ENCODE measurements at regions of chr12 and their contacts with region 1.

Region 1: DNA sequence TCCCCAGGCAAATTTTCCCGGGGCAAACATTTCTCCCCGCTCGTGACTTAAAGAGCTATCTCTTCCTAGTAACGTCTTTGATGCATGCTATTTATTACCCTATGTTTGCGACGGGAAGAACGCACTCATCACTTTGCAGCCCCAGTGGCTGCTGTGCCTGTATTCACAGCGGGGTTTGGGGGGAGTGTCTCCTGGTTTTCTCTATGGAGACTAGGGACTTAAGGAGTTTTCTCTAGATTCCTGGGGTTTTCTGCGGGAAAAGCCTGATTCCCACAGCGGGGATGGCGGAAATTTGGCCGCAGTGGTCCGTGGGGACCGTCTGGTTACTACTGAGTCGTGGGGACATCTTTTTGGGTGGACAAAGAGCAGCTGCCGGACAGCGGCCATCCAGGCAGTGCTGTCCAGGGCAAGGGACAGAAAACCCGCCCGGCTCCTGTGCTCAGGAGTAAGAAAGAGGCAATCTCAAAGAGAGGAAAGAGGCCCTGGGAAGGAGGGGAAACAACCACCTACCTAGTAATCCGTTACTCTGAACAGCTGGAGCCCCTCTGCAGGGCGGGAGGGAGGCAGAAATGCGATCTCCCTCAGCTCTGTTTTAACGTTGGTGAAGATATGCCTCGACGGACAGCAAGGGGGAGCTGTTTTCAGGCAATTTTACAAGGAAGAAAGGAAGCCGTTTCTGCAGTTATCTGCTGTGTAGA is 771 bp upstream of the AVPR1A start:
- DNase-seq: peak; percentile 62 to 67
- H3K4me3 ChIP-seq: peak overlapping the region; percentile 46 to 65 (median 58)
- H3K27ac ChIP-seq: no peak overlapping the region
- H3K4me1 ChIP-seq: peaks cover 0 to 13% (median 9%) of the 10 kb centered on the region in 4 experiments; a peak in 5 of 7 replicates
- H3K27me3 ChIP-seq: peaks cover 17 to 41% (median 34%) of the 10 kb centered on the region in 4 experiments
- CTCF ChIP-seq: peak; percentile 67 to 95 (median 72)
- EP300 ChIP-seq: no peak
- POLR2A ChIP-seq: no peak
- RAD21 ChIP-seq: peak; percentile 69 to 71

Region 2: GRCh38 chr12:62995097-62995496 is 156.7 kb before region 1 on chr12:
- CTCF ChIA-PET with region 1: no interaction called
- POLR2A ChIA-PET with region 1: no interaction called
- DNase-seq: peak in 1 of 2 experiments; percentile 15
- H3K4me3 ChIP-seq: no peak overlapping the region
- H3K27ac ChIP-seq: no peak overlapping the region
- H3K4me1 ChIP-seq: peaks cover 0 to 5% (median 0%) of the 10 kb centered on the region in 4 experiments; a peak in 1 of 7 replicates
- H3K27me3 ChIP-seq: no peaks in the 10 kb centered on the region; a peak in 1 of 7 replicates
- CTCF ChIP-seq: peak in 2 of 3 experiments; percentile 14 to 37; a peak in 1 of 4 replicates
- EP300 ChIP-seq: no peak
- POLR2A ChIP-seq: no peak
- RAD21 ChIP-seq: peak; percentile 36 to 55; a peak in 3 of 4 replicates

Region 3: GRCh38 chr12:63006536-63006935 is 145.2 kb before region 1 on chr12:
- CTCF ChIA-PET with region 1: no interaction called
- POLR2A ChIA-PET with region 1: no interaction called
- DNase-seq: no peak
- H3K4me3 ChIP-seq: no peak overlapping the region
- H3K27ac ChIP-seq: no peak overlapping the region
- H3K4me1 ChIP-seq: no peaks in the 10 kb centered on the region
- H3K27me3 ChIP-seq: no peaks in the 10 kb centered on the region
- CTCF ChIP-seq: no peak
- EP300 ChIP-seq: no peak
- POLR2A ChIP-seq: no peak
- RAD21 ChIP-seq: no peak

Region 4: GRCh38 chr12:63037746-63038718 is 113.7 kb before region 1 on chr12:
- CTCF ChIA-PET with region 1: no interaction called
- POLR2A ChIA-PET with region 1: no interaction called
- DNase-seq: no peak
- H3K4me3 ChIP-seq: no peak overlapping the region
- H3K27ac ChIP-seq: no peak overlapping the region
- H3K4me1 ChIP-seq: no peaks in the 10 kb centered on the region
- H3K27me3 ChIP-seq: no peaks in the 10 kb centered on the region
- CTCF ChIP-seq: no peak
- EP300 ChIP-seq: no peak
- POLR2A ChIP-seq: no peak
- RAD21 ChIP-seq: no peak

Region 5: GRCh38 chr12:63075376-63076060 is 76.3 kb before region 1 on chr12:
- CTCF ChIA-PET with region 1: no interaction called
- POLR2A ChIA-PET with region 1: no interaction called
- DNase-seq: no peak
- H3K4me3 ChIP-seq: no peak overlapping the region
- H3K27ac ChIP-seq: no peak overlapping the region
- H3K4me1 ChIP-seq: peaks cover 0 to 3% (median 0%) of the 10 kb centered on the region in 4 experiments; a peak in 1 of 7 replicates
- H3K27me3 ChIP-seq: no peaks in the 10 kb centered on the region
- CTCF ChIP-seq: no peak
- EP300 ChIP-seq: no peak
- POLR2A ChIP-seq: no peak
- RAD21 ChIP-seq: no peak

Region 6: DNA sequence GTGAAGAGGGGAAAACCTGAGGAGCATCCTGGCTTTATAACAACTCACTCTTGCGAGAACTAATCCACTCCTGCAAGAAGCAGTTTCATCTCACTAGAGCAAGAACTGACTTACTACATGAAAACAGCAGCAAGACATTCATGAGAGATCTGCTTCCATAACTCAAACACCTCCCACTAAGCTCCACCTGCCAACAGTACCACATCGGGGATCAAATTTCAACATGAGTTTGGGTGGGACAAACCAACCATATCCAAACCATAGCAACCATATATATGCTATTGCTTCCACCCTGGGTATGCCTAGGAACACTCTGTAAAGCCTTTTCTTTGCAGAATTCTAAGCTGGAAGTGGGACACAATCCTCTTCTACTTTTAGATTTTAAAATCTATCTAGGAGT is 13.1 kb after region 1 on chr12:
- CTCF ChIA-PET with region 1: interaction called, 19 read pairs
- POLR2A ChIA-PET with region 1: no interaction called
- DNase-seq: no peak
- H3K4me3 ChIP-seq: no peak overlapping the region
- H3K27ac ChIP-seq: no peak overlapping the region
- H3K4me1 ChIP-seq: peaks cover 0 to 2% (median 0%) of the 10 kb centered on the region in 4 experiments; a peak in 1 of 7 replicates
- H3K27me3 ChIP-seq: no peaks in the 10 kb centered on the region
- CTCF ChIP-seq: no peak
- EP300 ChIP-seq: no peak
- POLR2A ChIP-seq: no peak
- RAD21 ChIP-seq: no peak

Region 7: DNA sequence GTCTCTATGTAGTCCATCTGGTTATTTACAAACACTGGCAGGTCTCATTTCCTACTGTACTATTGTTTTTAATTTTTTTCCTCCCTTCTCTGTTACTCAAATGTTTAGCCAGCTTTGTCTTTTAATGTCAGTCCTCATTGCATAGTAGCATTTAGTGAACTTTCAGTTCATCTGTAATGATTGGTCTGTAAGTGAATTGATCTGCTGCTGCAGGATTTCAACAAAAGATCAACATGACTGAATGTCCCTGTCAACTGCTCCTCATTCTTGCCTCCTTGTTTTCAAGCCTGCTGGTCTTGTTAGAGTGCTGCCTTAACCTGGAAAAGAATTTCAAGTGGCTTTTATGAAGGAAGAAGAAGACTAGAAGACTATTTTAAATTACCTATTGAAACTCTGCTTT is 18.5 kb after region 1 on chr12:
- CTCF ChIA-PET with region 1: interaction called, 19 read pairs
- POLR2A ChIA-PET with region 1: no interaction called
- DNase-seq: no peak
- H3K4me3 ChIP-seq: no peak overlapping the region
- H3K27ac ChIP-seq: no peak overlapping the region
- H3K4me1 ChIP-seq: no peaks in the 10 kb centered on the region
- H3K27me3 ChIP-seq: no peaks in the 10 kb centered on the region
- CTCF ChIP-seq: no peak
- EP300 ChIP-seq: no peak
- POLR2A ChIP-seq: no peak
- RAD21 ChIP-seq: no peak

Region 8: GRCh38 chr12:63276537-63277365 is 125.0 kb after region 1 on chr12:
- CTCF ChIA-PET with region 1: interaction called, 17 read pairs
- POLR2A ChIA-PET with region 1: no interaction called
- DNase-seq: peak; percentile 38 to 69
- H3K4me3 ChIP-seq: no peak overlapping the region
- H3K27ac ChIP-seq: no peak overlapping the region
- H3K4me1 ChIP-seq: no peaks in the 10 kb centered on the region
- H3K27me3 ChIP-seq: no peaks in the 10 kb centered on the region
- CTCF ChIP-seq: peak; percentile 46 to 82 (median 78)
- EP300 ChIP-seq: no peak
- POLR2A ChIP-seq: no peak
- RAD21 ChIP-seq: peak; percentile 80 to 83

Measured in H1 (cell line).